ENCODE measurements at regions of chr10 and their contacts with region 1.

Region 1: GRCh38 chr10:17228091-17228940 is at the start of gene VIM:
- DNase-seq: peak; percentile 95
- total RNA-seq, gene VIM: 368 TPM

Region 2: GRCh38 chr10:17006631-17007417 is 221.5 kb before region 1 on chr10:
- intact Hi-C with region 1: loop called (anchors 5 kb)
- DNase-seq: no peak

Region 3: GRCh38 chr10:17175551-17175950 is 52.8 kb before region 1 on chr10:
- intact Hi-C with region 1: no loop called
- DNase-seq: no peak

Region 4: GRCh38 chr10:17348501-17349349 is 120.4 kb after region 1 on chr10:
- intact Hi-C with region 1: no loop called
- DNase-seq: no peak

Region 5: DNA sequence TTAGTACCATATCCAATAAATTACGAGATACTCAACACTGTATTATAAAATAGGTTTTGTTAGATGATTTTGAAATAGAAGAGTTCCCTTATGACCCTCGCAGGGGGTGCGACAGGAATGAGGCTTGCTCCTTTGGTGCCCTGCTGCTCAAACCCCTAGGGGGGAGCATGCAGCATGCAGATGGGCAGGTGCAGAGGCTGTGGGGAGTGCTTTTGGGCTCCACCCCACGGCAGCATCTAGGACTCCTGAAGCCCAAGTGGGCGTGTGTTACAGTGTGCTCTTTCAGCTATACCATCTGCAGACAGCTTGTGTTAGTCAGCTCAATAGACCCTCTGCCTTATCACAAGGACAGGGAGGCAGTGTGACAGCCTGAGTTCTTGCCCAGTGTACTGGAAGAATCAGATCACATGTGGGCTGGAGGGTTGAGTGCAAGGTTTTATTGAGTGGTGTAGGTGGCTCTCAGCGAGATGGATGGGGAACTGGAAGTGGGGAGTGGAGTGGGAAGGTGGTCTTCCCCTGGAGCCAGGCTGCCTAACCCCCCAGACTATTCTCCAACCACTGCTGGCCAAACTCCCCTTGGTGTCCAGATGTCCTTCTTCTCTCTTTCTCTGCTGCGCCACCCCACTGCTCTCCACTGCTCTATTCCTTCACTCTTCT is 577.7 kb after region 1 on chr10:
- intact Hi-C with region 1: no loop called
- DNase-seq: no peak

Measured in cardiac septum (tissue), 1 donor.